Dorsolateral prefrontal cortex (tissue), 120 donors: ENCODE measurements at regions of chr3 and their contacts with region 1.

Region 1: DNA sequence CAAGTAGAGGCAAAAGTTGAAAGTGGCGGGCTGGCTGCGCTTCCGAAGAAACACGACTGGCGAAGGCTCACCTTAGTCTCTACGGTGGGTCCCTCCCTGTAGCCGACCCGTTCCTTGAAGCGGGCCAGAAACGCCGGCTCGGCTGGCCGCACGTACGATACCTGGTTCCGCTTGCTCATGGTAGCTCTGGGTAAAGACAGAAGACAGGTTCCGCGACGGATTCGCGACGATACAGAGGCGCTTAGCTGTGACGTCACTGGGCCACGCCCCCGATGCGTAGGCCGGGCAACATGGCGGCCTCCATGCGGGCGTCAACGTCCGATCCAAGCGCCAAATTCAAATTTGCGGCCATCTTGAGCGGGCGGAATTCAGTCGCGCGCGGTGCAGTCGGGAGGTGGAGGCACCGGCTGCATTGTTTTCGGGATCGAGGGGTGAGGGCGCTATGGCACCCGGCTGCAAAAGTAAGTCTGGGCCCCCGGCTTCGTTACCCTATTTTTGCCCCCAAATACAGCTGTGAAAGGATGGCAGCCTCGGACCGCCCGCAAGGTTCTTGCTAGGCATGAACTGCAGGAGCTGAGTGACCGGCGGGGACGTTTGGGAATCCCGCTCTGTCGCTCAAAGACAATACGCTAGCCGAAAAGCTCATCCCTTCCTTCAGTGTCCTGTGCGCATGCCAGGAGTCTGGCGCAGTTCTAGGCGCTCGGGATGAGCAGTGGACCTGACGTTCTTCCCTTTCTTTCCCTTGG is at the starts of genes KIAA1143 and KIF15:
- DNase-seq: peak; percentile 94 to 96 (median 96)
- H3K4me3 ChIP-seq: peak within 1 kb of the TSS; percentile 63 to 98 (median 84)
- H3K27ac ChIP-seq: peak within 1 kb of the TSS in 39 of 59 donors; percentile 15 to 86 (median 66)
- H3K27me3 ChIP-seq: no peaks in the 10 kb centered on the region
- CTCF ChIP-seq: peak in 37 of 56 donors; percentile 6 to 51 (median 29)
- total RNA-seq, gene KIAA1143: 14.8 to 43.5 (median 27.6) TPM
- total RNA-seq, gene KIF15: 0.31 to 3.4 (median 1.5) TPM

Region 2: DNA sequence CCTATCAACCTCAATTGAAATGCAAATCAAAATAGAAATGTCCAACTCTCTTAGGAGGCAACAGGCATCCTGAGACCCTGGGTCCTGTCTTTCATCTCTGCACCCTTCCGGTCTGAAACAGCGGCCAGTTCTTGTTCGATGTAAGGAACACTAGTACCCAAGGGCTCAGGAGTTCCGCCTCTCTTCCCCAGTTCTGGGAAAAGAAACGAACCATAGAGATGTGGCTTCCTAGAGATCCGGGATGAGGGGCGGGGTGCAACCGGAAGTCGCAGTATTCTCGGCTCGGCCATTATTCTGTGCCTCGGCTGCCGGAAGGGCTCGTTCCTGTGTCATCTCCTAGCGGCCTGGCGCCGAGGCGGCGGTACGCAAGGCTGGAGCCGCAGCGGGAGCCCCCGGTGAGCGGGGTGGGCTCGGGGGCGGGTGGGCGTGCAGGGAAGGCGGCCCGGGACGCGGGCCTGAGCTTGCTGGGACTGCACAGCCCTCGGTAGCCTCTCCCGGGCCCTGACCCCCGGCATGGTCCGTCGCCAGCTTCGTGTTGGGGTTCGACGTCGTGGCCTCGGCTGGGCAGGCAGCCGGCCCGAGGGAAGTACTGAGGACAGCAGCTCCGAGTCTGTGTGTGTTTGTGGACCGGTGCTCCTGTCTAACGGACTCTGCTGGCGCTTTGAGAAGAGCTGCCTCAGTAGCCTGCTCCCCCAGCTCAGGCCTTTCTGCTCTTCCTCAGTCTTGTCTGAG is 136.7 kb before region 1 on chr3 and contains the start of gene ZNF197:
- intact Hi-C with region 1: no loop called
- DNase-seq: peak; percentile 81 to 93 (median 90)
- H3K4me3 ChIP-seq: peak within 1 kb of the TSS; percentile 48 to 98 (median 93)
- H3K27ac ChIP-seq: peak within 1 kb of the TSS in 57 of 59 donors; percentile 14 to 94 (median 86)
- H3K27me3 ChIP-seq: no peaks in the 10 kb centered on the region
- CTCF ChIP-seq: peak in 52 of 56 donors; percentile 16 to 70 (median 49)
- total RNA-seq, gene ZNF197: 18.3 to 34.0 (median 24.6) TPM

Region 3: GRCh38 chr3:44712455-44713075 is 49.0 kb before region 1 on chr3 and contains the start of gene ZNF502:
- intact Hi-C with region 1: loop called (anchors 5 kb)
- DNase-seq: peak; percentile 86 to 95 (median 92)
- H3K4me3 ChIP-seq: peak within 1 kb of the TSS; percentile 54 to 99 (median 84)
- H3K27ac ChIP-seq: peak within 1 kb of the TSS in 26 of 59 donors; percentile 1 to 81 (median 50)
- H3K27me3 ChIP-seq: peaks cover 0 to 11% (median 0%) of the 10 kb centered on the region in 45 donors
- CTCF ChIP-seq: peak in 51 of 56 donors; percentile 22 to 65 (median 44)
- total RNA-seq, gene ZNF502: 2.8 to 9.2 (median 5.1) TPM

Region 4: DNA sequence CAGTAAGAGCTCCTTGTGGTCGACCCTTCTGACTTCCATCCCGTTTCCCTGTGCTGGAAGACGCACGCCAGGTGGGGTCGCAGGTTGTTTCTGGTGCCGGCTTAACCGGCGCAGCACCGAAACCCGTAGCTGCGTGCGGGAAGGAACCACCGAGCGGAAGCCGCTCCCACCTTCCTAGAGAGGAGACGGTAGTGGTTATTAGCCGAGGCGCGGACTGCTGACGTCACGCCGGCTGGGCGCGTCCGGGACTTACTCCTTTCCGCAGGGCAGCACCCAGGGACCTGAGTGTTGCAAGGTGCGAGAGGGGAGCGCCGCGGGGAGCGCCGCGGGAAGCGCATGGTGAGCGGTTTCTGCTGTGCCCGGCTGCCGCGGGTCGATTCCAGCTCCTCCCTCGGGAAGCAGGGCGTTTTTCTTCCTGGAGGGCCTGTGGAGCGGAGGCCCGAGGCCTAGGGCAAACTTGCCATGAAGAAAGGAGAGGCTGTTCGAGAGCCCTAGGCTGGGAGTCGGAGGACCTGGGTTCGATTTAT is 32.1 kb before region 1 on chr3 and contains the start of gene ZNF501:
- intact Hi-C with region 1: loop called in 1 of 2 experiments (anchors 1 kb)
- DNase-seq: peak; percentile 85 to 97 (median 92)
- H3K4me3 ChIP-seq: peak within 1 kb of the TSS; percentile 50 to 92 (median 77)
- H3K27ac ChIP-seq: peak within 1 kb of the TSS in 8 of 59 donors; percentile 1 to 61 (median 30)
- H3K27me3 ChIP-seq: no peaks in the 10 kb centered on the region
- CTCF ChIP-seq: peak in 24 of 56 donors; percentile 7 to 50 (median 21)
- total RNA-seq, gene ZNF501: 2.2 to 12.3 (median 6.1) TPM

Region 5: DNA sequence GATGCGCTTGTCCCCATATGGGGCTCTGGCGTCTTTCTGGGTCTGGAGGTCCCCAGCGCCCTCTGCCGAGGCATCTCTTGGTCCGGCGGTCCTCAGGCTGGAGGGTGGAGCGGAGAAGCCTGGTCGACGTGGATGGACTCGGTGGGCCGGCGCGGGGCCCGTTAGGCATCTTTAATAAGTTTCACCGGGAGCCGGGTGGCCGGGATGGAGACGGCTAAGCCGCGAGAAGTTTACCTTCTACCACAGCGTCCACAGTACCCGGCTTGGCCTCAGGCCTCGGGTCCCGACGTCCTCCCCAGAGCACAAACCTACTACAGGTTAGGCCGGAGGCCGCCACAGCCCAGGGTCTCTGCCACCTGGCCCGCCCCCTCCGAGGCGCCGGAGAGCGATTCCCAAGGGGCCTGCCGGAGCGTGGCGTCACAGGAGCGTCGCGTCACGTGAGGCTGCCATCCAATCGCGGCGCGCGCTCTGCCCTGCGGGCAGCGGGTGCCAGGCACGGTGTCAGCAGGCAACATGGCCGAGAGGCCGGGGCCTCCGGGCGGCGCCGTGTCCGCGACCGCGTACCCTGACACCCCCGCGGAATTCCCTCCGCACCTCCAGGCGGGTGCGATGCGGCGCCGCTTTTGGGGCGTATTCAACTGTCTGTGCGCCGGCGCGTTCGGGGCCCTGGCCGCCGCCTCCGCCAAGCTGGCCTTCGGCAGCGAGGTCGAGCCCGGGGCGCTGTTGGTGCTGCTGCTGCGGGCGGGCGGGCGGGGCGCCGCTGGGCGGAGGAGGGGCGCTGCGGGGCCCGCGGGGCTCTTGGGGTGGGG is 100.0 kb after region 1 on chr3 and contains the start of gene TMEM42:
- intact Hi-C with region 1: loop called (anchors 2 to 5 kb)
- DNase-seq: peak; percentile 88 to 97 (median 91)
- H3K4me3 ChIP-seq: peak within 1 kb of the TSS; percentile 55 to 98 (median 83)
- H3K27ac ChIP-seq: peak within 1 kb of the TSS; percentile 82 to 98 (median 94)
- H3K27me3 ChIP-seq: no peaks in the 10 kb centered on the region
- CTCF ChIP-seq: peak in 40 of 56 donors; percentile 2 to 50 (median 28)
- total RNA-seq, gene TMEM42: 13.8 to 39.0 (median 21.6) TPM

Region 6: DNA sequence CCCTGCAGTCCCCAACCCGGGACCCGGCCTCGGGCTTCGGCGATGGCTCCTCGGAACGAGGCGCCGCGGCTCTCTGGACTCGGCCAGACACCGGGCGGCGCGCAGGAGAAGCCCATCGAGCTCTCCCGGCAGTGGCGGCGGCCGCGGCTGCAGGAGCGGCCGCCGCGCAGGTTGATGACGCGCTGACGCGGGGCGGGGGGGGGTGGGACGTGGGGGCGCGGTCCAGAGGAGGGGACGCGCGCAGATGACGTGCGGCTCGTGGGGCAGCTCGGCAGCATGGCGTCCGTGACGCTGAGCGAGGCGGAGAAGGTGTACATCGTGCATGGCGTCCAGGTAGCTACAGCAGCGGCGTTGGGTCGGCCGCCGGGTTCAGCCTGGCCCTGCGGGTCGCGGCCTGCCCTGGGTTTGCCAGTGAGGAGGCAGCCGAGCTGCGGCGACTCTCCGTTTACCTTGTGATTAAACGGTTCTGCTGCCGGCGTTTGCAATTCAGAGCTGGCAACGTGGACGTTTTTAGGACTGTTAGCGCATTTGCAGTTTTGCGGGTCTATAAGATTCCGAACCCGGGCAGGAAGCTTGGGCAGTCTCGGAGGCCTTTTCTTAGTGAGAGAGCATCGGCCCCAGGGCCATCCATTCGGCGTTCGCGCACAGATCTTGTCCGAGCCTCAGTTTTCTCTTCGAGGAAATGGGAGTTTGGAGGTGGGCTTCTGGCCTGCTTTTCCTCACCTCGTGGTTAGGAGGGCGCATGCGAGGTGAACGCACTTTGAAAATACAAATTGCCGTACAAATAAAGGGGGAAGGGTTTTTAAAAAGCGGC is 214.6 kb after region 1 on chr3 and contains the starts of genes EXOSC7 and ZDHHC3:
- intact Hi-C with region 1: loop called in 1 of 2 experiments (anchors 5 kb)
- DNase-seq: peak; percentile 78 to 90 (median 86)
- H3K4me3 ChIP-seq: peak within 1 kb of the TSS; percentile 65 to 100 (median 94)
- H3K27ac ChIP-seq: peak within 1 kb of the TSS in 50 of 59 donors; percentile 37 to 92 (median 72)
- H3K27me3 ChIP-seq: no peaks in the 10 kb centered on the region
- CTCF ChIP-seq: peak in 33 of 56 donors; percentile 7 to 60 (median 26)
- total RNA-seq, gene EXOSC7: 25.6 to 46.6 (median 33.5) TPM
- total RNA-seq, gene ZDHHC3: 41.3 to 77.7 (median 54.1) TPM

Region 7: DNA sequence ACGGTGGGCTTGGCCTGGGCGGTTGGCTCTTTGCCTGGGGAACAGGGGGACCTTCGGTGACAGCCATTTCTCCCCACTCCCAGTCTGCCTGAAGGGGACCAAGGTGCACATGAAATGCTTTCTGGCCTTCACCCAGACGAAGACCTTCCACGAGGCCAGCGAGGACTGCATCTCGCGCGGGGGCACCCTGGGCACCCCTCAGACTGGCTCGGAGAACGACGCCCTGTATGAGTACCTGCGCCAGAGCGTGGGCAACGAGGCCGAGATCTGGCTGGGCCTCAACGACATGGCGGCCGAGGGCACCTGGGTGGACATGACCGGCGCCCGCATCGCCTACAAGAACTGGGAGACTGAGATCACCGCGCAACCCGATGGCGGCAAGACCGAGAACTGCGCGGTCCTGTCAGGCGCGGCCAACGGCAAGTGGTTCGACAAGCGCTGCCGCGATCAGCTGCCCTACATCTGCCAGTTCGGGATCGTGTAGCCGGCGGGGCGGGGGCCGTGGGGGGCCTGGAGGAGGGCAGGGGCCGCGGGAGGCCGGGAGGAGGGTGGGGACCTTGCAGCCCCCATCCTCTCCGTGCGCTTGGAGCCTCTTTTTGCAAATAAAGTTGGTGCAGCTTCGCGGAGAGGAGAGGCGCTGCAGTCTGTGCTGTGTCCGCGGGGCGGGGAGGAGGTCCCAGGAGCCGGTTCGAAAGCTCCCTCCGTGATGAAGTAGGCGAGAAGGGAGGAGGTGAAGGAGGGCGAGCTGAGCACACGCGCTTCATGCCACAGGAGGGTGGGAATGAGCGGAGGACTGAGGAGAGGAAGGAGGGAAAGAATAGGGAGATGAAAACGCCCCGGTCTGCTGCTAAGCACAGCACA is 274.1 kb after region 1 on chr3:
- intact Hi-C with region 1: no loop called
- DNase-seq: peak in 6 of 10 donors; percentile 31 to 64 (median 49)
- H3K4me3 ChIP-seq: peak overlapping the region; percentile 6 to 69 (median 48)
- H3K27ac ChIP-seq: peak overlapping the region in 32 of 59 donors; percentile 14 to 78 (median 48)
- H3K27me3 ChIP-seq: no peaks in the 10 kb centered on the region
- CTCF ChIP-seq: peak in 7 of 56 donors; percentile 4 to 31 (median 12)